ENCODE measurements at regions of chr9 and their contacts with region 1.

Region 1: DNA sequence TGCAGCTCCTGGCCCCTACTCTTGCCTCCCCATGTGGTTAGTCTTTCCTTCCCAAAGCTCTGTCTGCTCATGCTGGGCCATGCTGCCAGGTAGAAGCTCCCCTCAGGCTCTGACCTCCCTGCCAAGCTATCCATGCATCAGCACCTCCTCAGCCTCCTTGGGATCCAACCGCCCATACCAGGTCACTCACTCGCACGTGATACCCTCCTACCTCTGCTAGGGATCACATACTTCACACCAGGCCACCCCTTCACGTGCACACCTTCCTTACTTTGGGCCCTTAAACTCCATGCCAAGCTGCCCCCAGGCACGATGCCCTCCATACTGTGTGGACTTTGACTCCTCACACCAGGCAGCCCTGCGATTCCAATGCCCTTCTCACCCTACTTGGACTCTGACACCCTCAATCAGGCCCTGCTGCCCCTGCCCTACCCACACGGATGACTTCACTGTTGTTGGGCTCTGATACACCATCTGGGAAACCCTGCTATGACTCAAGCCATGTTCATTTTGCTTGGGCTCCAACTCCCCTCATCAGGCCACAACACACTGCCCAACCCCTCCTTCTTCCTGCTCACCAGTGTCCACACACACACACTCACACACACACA is 34.1 kb downstream of the ZNF483 start:
- DNase-seq: no peak
- H3K4me3 ChIP-seq: no peak overlapping the region
- H3K27me3 ChIP-seq: no peaks in the 10 kb centered on the region
- CTCF ChIP-seq: no peak

Region 2: DNA sequence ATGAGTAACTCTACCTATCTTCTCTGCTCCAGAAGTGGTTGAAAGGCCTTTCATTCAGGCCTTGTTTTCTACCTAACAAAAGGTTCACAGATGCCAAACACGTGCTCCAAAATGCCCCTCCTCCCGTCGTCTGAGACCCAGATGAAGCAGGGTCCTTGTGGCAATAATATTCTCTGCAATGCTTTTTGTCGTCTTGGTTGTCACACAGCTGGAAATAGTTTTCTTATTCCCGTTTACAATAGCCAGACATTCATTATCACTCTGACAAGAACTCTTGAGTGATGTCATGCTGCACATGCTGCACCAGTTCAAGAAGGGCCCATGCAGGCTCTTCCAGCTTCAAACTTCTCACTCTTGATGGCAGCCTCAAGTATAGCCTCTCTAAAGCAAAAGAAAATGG is 528.6 kb before region 1 on chr9:
- CTCF ChIA-PET with region 1: no interaction called
- POLR2A ChIA-PET with region 1: interaction called, 10 read pairs
- DNase-seq: no peak
- H3K4me3 ChIP-seq: no peak overlapping the region
- H3K27me3 ChIP-seq: no peaks in the 10 kb centered on the region
- CTCF ChIP-seq: no peak

Measured in BJ (cell line).